PC-9 (cell line): ENCODE measurements at regions of chr17 and their contacts with region 1.

Region 1: GRCh38 chr17:40915199-40915661 is 22.2 kb downstream of the KRT23 start:
- DNase-seq: peak in 1 of 2 experiments; percentile 99
- H3K4me3 ChIP-seq: no peak overlapping the region
- H3K27ac ChIP-seq: peak overlapping the region; percentile 99
- H3K4me1 ChIP-seq: peaks cover 74% of the 10 kb centered on the region
- H3K27me3 ChIP-seq: no peaks in the 10 kb centered on the region
- CTCF ChIP-seq: no peak

Region 2: GRCh38 chr17:40841246-40841645 is 74.0 kb before region 1 on chr17:
- CTCF ChIA-PET with region 1: no interaction called
- POLR2A ChIA-PET with region 1: no interaction called
- intact Hi-C with region 1: no loop called
- DNase-seq: no peak
- H3K4me3 ChIP-seq: no peak overlapping the region
- H3K27ac ChIP-seq: no peak overlapping the region
- H3K4me1 ChIP-seq: no peaks in the 10 kb centered on the region
- H3K27me3 ChIP-seq: no peaks in the 10 kb centered on the region
- CTCF ChIP-seq: no peak

Region 3: DNA sequence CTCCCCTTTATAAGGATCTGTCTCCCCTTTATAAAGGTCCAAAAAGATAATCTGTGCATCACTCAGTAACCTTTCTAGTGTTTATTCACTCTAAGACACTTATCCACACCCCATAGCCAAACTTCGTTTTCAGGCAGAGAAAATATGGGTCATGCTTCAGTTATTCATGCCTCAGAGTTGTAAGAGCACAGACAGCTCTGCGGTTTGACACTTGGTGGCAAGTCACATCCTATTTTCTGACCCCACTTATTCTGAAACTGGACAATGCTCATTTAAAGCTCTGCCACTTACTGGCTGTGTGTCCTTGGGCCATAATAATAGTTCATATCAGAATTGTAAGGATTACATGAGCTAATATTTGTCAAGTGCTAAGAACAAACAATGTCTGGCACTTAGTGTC is 133.9 kb after region 1 on chr17:
- CTCF ChIA-PET with region 1: no interaction called
- POLR2A ChIA-PET with region 1: no interaction called
- intact Hi-C with region 1: loop called (anchors 1 kb)
- DNase-seq: peak; percentile 17 to 92
- H3K4me3 ChIP-seq: peak overlapping the region; percentile 33; the same call in 1 of the 2 replicates
- H3K27ac ChIP-seq: peak overlapping the region; percentile 97
- H3K4me1 ChIP-seq: peaks cover 33% of the 10 kb centered on the region
- H3K27me3 ChIP-seq: no peaks in the 10 kb centered on the region
- CTCF ChIP-seq: no peak

Region 4: DNA sequence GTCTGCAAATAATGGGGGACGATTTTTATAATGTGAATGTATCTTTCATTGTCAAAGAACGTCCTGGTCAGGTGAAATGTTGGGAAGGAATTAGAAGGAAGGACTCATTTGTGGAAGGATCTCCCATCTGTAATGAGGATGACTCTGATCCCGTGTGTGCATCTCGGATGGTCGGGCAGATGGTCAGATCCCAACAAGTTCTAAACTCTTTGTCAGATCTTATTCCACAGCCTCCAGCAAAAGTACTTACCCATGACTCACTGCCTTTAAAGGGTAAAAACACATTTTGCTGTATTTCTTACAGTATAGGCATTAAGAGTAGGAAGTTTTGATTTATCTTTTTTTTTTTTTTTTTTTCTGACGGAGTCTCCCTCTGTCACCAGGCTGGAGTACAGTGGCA is 183.2 kb after region 1 on chr17:
- CTCF ChIA-PET with region 1: no interaction called
- POLR2A ChIA-PET with region 1: no interaction called
- intact Hi-C with region 1: loop called (anchors 1 kb)
- DNase-seq: no peak
- H3K4me3 ChIP-seq: no peak overlapping the region
- H3K27ac ChIP-seq: peak overlapping the region; percentile 58; the same call in 1 of the 2 replicates
- H3K4me1 ChIP-seq: peaks cover 29% of the 10 kb centered on the region
- H3K27me3 ChIP-seq: no peaks in the 10 kb centered on the region
- CTCF ChIP-seq: no peak

Region 5: DNA sequence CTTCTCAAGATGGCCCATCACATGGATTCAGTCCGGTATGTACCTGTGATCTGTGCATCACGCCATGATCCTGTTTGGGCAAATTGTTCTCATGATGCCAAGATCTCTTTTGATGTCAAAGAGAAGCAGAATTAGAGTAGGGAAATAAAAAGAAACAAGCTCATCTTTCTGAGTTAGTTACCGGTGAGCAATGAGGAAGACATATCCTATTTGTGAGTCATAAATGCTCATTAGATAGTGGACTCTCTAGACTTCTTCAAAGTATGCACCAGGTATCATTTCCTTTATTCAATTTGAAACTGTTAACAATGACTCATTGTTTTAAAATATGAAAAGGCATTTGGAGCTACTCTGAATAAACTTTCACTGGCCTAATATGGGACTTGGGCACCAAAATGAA is 216.7 kb after region 1 on chr17:
- CTCF ChIA-PET with region 1: no interaction called
- POLR2A ChIA-PET with region 1: interaction called, 10 read pairs
- intact Hi-C with region 1: loop called (anchors 1 kb)
- DNase-seq: peak; percentile 20 to 93
- H3K4me3 ChIP-seq: no peak overlapping the region
- H3K27ac ChIP-seq: peak overlapping the region; percentile 87
- H3K4me1 ChIP-seq: peaks cover 21% of the 10 kb centered on the region
- H3K27me3 ChIP-seq: no peaks in the 10 kb centered on the region
- CTCF ChIP-seq: no peak